ENCODE measurements at regions of chr19 and their contacts with region 1.

Region 1: DNA sequence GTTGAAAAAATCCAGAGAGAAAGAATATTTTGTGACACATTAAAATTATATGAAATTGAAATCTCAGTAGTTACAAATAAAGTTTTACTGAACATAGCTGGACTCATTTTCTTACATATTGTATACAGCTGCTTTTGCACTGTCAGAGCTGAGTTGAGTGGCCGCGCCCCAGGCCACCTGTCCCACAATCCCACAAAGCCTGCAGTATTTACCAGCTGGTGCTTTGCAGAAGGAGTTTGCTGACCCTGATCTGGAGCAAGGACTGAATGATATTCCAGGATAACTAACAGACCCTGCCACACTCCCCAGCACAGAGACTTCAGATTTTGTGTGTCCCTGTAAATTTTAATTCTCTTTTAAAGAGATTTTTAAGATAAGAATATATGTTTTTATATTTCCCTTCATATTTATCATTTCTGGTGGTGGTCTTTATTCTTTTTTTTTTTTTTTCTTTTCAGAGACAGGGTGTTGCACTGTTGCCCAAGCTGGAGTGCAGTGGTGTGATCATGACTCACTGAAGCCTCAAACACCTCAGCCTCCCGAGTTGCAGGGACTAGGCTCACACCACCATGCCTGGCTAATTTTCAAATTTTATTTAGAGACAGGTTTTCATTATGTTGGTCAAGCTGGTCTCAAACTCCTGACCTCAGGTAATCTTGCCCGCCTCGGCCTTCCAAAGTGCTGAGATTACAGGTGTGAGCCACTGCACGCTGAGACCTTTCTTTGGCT is 48.5 kb downstream of the TDRD12 start:
- DNase-seq: peak; percentile 25
- H3K4me3 ChIP-seq: no peak overlapping the region
- H3K27ac ChIP-seq: no peak overlapping the region
- H3K4me1 ChIP-seq: no peaks in the 10 kb centered on the region
- H3K27me3 ChIP-seq: no peaks in the 10 kb centered on the region
- CTCF ChIP-seq: no peak

Region 2: GRCh38 chr19:32779082-32779481 is 11.0 kb after region 1 on chr19:
- CTCF ChIA-PET with region 1: interaction called, 10 read pairs
- dilution Hi-C with region 1: no loop called
- in situ Hi-C with region 1: no loop called
- intact Hi-C with region 1: no loop called
- DNase-seq: no peak
- H3K4me3 ChIP-seq: no peak overlapping the region
- H3K27ac ChIP-seq: no peak overlapping the region
- H3K4me1 ChIP-seq: peaks cover 3% of the 10 kb centered on the region
- H3K27me3 ChIP-seq: no peaks in the 10 kb centered on the region
- CTCF ChIP-seq: no peak

Measured in mammary epithelial cell (primary cell).